Pancreas (tissue), 10 donors: ENCODE measurements at regions of chr15 and their contacts with region 1.

Region 1: DNA sequence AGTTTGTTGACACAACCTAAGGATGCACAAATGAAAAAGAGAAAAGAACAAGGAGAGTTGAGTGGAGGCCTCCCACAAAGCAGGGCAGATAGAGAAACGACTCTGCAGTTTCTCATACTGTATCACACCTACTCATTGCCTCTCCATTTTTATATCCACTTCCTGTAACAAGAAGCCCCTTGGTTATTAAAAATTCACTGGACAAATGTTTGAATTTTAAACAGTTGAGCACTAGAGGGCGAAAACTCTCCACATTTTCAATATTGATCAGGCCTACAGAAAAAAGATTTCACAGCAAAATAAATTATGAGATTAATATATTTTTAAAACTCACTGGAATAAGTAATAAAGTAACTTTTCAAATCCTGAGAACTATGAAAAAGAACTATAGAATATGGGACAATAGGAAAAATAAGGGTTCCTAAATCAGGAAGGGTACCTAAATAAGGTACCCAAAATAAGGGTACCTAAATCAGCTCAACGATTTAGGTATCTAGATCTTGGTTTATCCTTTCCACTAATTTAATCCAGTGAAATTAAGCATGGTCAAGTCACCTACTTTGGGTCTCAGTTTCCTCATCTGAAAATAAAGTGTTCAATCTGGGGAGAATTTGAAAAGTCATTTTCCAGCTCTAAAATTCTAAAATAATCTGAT is 47.0 kb upstream of the PPIB start:
- DNase-seq: no peak
- ATAC-seq: peak in 3 of 4 donors; percentile 60 to 66 (median 66)
- H3K4me3 ChIP-seq: no peak overlapping the region
- H3K27ac ChIP-seq: no peak overlapping the region
- H3K4me1 ChIP-seq: no peaks in the 10 kb centered on the region
- H3K27me3 ChIP-seq: no peaks in the 10 kb centered on the region
- CTCF ChIP-seq: peak in 1 of 4 donors; percentile 15

Region 2: GRCh38 chr15:64355944-64356709 is 146.3 kb after region 1 on chr15 and contains the start of gene CSNK1G1:
- intact Hi-C with region 1: loop called in 2 of 3 experiments (anchors 10 kb)
- DNase-seq: peak; percentile 90 to 95 (median 94)
- ATAC-seq: peak; percentile 97 to 100 (median 99)
- H3K4me3 ChIP-seq: peak within 1 kb of the TSS; percentile 65 to 79 (median 66)
- H3K27ac ChIP-seq: peak within 1 kb of the TSS; percentile 15 to 70 (median 49)
- H3K4me1 ChIP-seq: peaks cover 0 to 8% (median 0%) of the 10 kb centered on the region in 3 donors
- H3K27me3 ChIP-seq: no peaks in the 10 kb centered on the region
- CTCF ChIP-seq: peak in 1 of 4 donors; percentile 10
- total RNA-seq, gene CSNK1G1: 6.0 to 12.1 (median 8.1) TPM